Natural killer cell (primary cell): ENCODE measurements at regions of chr19 and their contacts with region 1.

Region 1: GRCh38 chr19:52296773-52297600 is at the start of gene ZNF480:
- DNase-seq: peak; percentile 87 to 95
- ATAC-seq: peak; percentile 87 to 89 (median 87)
- H3K4me3 ChIP-seq: peak within 1 kb of the TSS; percentile 94
- H3K4me3 Mint-ChIP-seq: peak within 1 kb of the TSS; percentile 99
- H3K27ac ChIP-seq: peak within 1 kb of the TSS; percentile 94
- H3K27ac Mint-ChIP-seq: peak within 1 kb of the TSS; percentile 84 to 94
- H3K4me1 ChIP-seq: peaks cover 14% of the 10 kb centered on the region
- H3K4me1 Mint-ChIP-seq: peaks cover 18 to 27% of the 10 kb centered on the region in 2 donors
- H3K27me3 ChIP-seq: no peaks in the 10 kb centered on the region
- H3K27me3 Mint-ChIP-seq: no peaks in the 10 kb centered on the region
- CTCF ChIP-seq: no peak
- total RNA-seq, gene ZNF480: 6.4 to 9.4 (median 7.6) TPM

Region 2: DNA sequence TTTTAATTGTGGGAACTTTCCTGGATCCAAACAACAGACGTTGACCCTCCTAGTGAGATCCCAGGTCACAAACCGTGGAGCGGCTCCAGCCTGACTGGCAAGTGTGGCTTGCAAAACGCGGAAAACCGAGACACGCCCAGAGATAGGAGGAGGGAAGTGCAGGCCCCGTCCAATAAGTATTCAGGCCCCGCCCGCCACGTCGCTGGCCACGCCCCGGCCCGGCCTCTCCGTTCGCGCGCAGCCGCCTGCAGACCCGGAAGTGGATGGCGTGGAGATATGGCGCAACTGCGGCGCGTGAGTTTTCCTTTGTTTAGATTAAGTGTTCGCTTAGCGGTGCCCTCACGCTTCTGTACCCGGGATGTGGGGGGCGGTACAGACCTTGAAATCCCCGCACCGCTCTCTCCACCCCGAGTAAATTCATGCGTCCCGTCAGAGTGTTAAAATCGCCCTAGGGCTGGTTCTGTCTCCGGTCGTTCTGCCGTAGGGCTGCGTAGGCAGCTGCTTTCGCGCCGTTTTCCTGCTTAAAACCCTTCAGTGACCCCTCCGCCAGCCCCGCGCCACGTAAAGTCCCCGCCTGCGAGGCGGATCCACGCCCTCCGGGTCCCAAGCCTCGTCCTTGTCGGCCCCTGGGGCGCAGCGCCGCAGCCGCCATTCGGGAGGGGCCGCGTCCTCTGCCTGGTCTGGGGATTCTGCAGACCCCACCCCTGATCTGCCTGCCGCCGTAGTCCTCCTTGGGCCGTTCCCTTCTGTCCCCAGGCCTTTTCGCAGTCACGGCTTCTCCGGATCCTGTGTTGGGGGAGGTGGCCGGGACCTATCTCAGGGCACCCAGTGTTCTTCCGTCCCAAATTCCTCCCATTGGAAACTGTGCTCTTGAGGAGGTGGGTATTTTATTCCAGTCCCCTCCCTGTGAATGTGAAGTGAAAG is 27.4 kb before region 1 on chr19 and contains the start of gene ZNF766:
- intact Hi-C with region 1: loop called (anchors 2 kb)
- DNase-seq: peak; percentile 96 to 98
- ATAC-seq: peak; percentile 98 to 100 (median 98)
- H3K4me3 ChIP-seq: peak within 1 kb of the TSS; percentile 98
- H3K4me3 Mint-ChIP-seq: peak within 1 kb of the TSS; percentile 98
- H3K27ac ChIP-seq: peak within 1 kb of the TSS; percentile 98
- H3K27ac Mint-ChIP-seq: peak within 1 kb of the TSS; percentile 89
- H3K4me1 ChIP-seq: peaks cover 19% of the 10 kb centered on the region
- H3K4me1 Mint-ChIP-seq: peaks cover 39 to 40% of the 10 kb centered on the region in 2 donors
- H3K27me3 ChIP-seq: no peaks in the 10 kb centered on the region
- H3K27me3 Mint-ChIP-seq: no peaks in the 10 kb centered on the region
- CTCF ChIP-seq: no peak
- total RNA-seq, gene ZNF766: 29.4 to 36.9 (median 32.9) TPM